ENCODE measurements at regions of chr1 and their contacts with region 1.

Region 1: GRCh38 chr1:211885747-211886522 is 55.4 kb upstream of the LPGAT1 start:
- DNase-seq: no peak
- H3K4me3 ChIP-seq: no peak overlapping the region
- H3K27ac ChIP-seq: no peak overlapping the region
- H3K4me1 ChIP-seq: no peaks in the 10 kb centered on the region
- H3K27me3 ChIP-seq: no peaks in the 10 kb centered on the region
- CTCF ChIP-seq: no peak
- EP300 ChIP-seq: no peak
- POLR2A ChIP-seq: no peak
- RAD21 ChIP-seq: no peak

Region 2: GRCh38 chr1:211654838-211655787 is 230.8 kb before region 1 on chr1:
- CTCF ChIA-PET with region 1: no interaction called
- POLR2A ChIA-PET with region 1: no interaction called
- DNase-seq: peak; percentile 67 to 96
- H3K4me3 ChIP-seq: no peak overlapping the region
- H3K27ac ChIP-seq: no peak overlapping the region
- H3K4me1 ChIP-seq: peaks cover 0 to 4% (median 0%) of the 10 kb centered on the region in 4 experiments; a peak in 3 of 7 replicates
- H3K27me3 ChIP-seq: no peaks in the 10 kb centered on the region
- CTCF ChIP-seq: peak; percentile 88 to 95 (median 90)
- EP300 ChIP-seq: no peak
- POLR2A ChIP-seq: no peak
- RAD21 ChIP-seq: peak; percentile 97 to 99

Region 3: GRCh38 chr1:211680752-211681327 is 205.1 kb before region 1 on chr1:
- CTCF ChIA-PET with region 1: interaction called, 10 read pairs
- POLR2A ChIA-PET with region 1: no interaction called
- DNase-seq: no peak
- H3K4me3 ChIP-seq: no peak overlapping the region
- H3K27ac ChIP-seq: no peak overlapping the region
- H3K4me1 ChIP-seq: peaks cover 0 to 3% (median 0%) of the 10 kb centered on the region in 4 experiments; a peak in 1 of 7 replicates
- H3K27me3 ChIP-seq: no peaks in the 10 kb centered on the region
- CTCF ChIP-seq: peak; percentile 38 to 85 (median 55)
- EP300 ChIP-seq: no peak
- POLR2A ChIP-seq: no peak
- RAD21 ChIP-seq: peak; percentile 83 to 84